ENCODE measurements at regions of chrX and their contacts with region 1.

Region 1: GRCh38 chrX:49922291-49923241 is at the start of gene CLCN5:
- DNase-seq: peak; percentile 95 to 97
- H3K4me3 ChIP-seq: peak within 1 kb of the TSS; percentile 77
- H3K4me3 Mint-ChIP-seq: peak within 1 kb of the TSS; percentile 75
- H3K27ac Mint-ChIP-seq: peak within 1 kb of the TSS; percentile 77
- H3K4me1 ChIP-seq: peaks cover 6% of the 10 kb centered on the region; the same call in 1 of the 2 replicates
- H3K4me1 Mint-ChIP-seq: peaks cover 35% of the 10 kb centered on the region
- H3K27me3 ChIP-seq: no peaks in the 10 kb centered on the region
- H3K27me3 Mint-ChIP-seq: no peaks in the 10 kb centered on the region
- CTCF ChIP-seq: no peak
- total RNA-seq, gene CLCN5: 61.0 and 70.0 TPM in 2 replicates

Region 2: GRCh38 chrX:49840679-49841078 is 81.9 kb before region 1 on chrX:
- CTCF ChIA-PET with region 1: no interaction called
- POLR2A ChIA-PET with region 1: no interaction called
- intact Hi-C with region 1: loop called (anchors 1 kb)
- DNase-seq: peak; percentile 80 to 88
- H3K4me3 ChIP-seq: no peak overlapping the region
- H3K4me3 Mint-ChIP-seq: no peak overlapping the region
- H3K27ac Mint-ChIP-seq: no peak overlapping the region
- H3K4me1 ChIP-seq: peaks cover 8% of the 10 kb centered on the region; the same call in 1 of the 2 replicates
- H3K4me1 Mint-ChIP-seq: no peaks in the 10 kb centered on the region
- H3K27me3 ChIP-seq: no peaks in the 10 kb centered on the region
- H3K27me3 Mint-ChIP-seq: no peaks in the 10 kb centered on the region
- CTCF ChIP-seq: peak; percentile 33 to 58

Region 3: GRCh38 chrX:49884290-49884862 is 38.2 kb before region 1 on chrX:
- CTCF ChIA-PET with region 1: interaction called, 4 read pairs
- POLR2A ChIA-PET with region 1: no interaction called
- intact Hi-C with region 1: loop called (anchors 1 kb)
- DNase-seq: peak; percentile 62 to 71
- H3K4me3 ChIP-seq: no peak overlapping the region
- H3K4me3 Mint-ChIP-seq: no peak overlapping the region
- H3K27ac Mint-ChIP-seq: peak overlapping the region; percentile 28
- H3K4me1 ChIP-seq: 0 out of 2 replicates have a peak, but pooled peaks cover 10% of the 10 kb centered on the region
- H3K4me1 Mint-ChIP-seq: peaks cover 15% of the 10 kb centered on the region
- H3K27me3 ChIP-seq: no peaks in the 10 kb centered on the region
- H3K27me3 Mint-ChIP-seq: no peaks in the 10 kb centered on the region
- CTCF ChIP-seq: peak; percentile 43 to 62

Region 4: GRCh38 chrX:49934148-49934547 is 11.6 kb after region 1 on chrX:
- CTCF ChIA-PET with region 1: no interaction called
- POLR2A ChIA-PET with region 1: no interaction called
- intact Hi-C with region 1: no loop called
- DNase-seq: no peak
- H3K4me3 ChIP-seq: no peak overlapping the region
- H3K4me3 Mint-ChIP-seq: no peak overlapping the region
- H3K27ac Mint-ChIP-seq: no peak overlapping the region
- H3K4me1 ChIP-seq: no peaks in the 10 kb centered on the region
- H3K4me1 Mint-ChIP-seq: no peaks in the 10 kb centered on the region
- H3K27me3 ChIP-seq: no peaks in the 10 kb centered on the region
- H3K27me3 Mint-ChIP-seq: no peaks in the 10 kb centered on the region
- CTCF ChIP-seq: no peak

Region 5: DNA sequence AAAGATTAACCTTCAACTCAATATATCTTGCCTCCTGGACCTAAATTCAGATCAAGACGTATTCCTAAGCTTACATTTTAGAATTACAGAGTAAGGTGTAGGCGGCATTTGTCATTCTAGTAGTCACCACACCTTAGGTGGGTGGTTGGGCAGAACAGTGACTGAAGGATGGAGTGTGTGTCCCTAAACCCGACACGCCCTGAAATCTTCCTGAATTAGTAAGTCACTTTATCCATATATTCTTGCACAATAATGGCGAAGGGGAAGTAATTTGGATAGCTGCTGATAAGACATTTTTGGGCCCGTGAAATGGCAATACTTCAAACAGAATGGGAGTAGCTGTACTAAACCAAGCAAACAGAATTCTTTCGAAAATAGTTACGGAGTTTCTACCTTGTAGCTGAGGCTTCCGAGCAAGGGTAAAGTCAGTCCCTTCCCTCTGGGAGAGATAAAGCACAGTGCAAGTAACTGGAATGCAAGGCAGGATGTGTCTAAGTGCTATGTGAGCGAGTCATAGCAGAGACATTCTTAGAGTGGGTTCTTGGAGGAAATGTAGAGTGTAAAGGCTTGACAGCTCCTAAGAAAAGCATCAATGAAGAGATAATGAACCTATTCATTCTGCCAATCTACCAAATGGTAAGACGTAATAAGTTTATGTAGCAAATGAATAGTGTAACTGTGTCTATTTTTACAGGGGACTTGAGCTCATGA is 72.6 kb after region 1 on chrX:
- CTCF ChIA-PET with region 1: no interaction called
- POLR2A ChIA-PET with region 1: no interaction called
- intact Hi-C with region 1: loop called (anchors 5 kb)
- DNase-seq: peak; percentile 64
- H3K4me3 ChIP-seq: no peak overlapping the region
- H3K4me3 Mint-ChIP-seq: peak overlapping the region; percentile 32
- H3K27ac Mint-ChIP-seq: peak overlapping the region; percentile 82
- H3K4me1 ChIP-seq: peaks cover 40% of the 10 kb centered on the region
- H3K4me1 Mint-ChIP-seq: peaks cover 55% of the 10 kb centered on the region
- H3K27me3 ChIP-seq: no peaks in the 10 kb centered on the region
- H3K27me3 Mint-ChIP-seq: no peaks in the 10 kb centered on the region
- CTCF ChIP-seq: no peak

Measured in Caco-2 (cell line).